Activated CD4-positive, alpha-beta T cell treated with anti-CD3 and anti-CD28 coated beads, Interleukin-2, amount 10 ng/mL, durations not matched to agents 24 days and 14 days (primary cell): ENCODE measurements at regions of chr17 and their contacts with region 1.

Region 1: DNA sequence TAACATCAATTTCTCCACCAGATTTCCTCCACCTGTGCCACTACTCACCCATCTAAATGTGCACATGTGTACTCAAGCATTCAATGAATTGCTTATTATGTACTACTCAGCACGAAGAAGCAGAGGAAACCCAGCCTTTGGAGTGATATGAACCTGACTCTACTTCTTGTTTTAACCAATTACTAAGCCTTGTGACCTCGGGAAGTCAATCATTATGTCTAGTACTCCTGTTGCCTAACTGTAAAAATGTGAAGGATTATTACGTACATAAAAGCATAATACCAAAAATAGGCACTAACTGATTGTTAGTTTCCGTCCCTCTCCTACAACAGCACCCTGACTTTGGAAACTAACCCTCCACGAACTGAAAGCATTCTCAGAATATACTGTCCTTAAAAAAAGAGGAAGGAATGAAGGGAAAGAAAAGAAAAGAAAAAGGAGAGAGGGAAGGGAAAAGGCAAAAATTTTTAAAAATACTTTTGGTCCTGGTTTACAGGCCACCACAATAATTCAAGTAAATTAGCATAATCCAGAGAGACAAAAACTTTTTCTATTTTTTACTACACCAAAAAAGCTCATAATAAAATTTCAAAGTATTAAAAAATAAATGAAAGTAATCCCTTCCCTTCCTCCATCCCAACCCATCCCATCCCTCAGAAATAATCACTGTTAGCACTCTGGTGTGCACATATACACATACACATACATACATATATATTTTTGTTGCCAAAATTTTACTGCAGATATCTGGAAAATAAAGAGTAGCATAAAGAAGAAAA is 53.6 kb downstream of the KANSL1 start:
- DNase-seq: no peak
- H3K4me3 Mint-ChIP-seq: no peak overlapping the region
- H3K27ac Mint-ChIP-seq: no peak overlapping the region
- H3K4me1 Mint-ChIP-seq: peaks cover 75% of the 10 kb centered on the region
- H3K27me3 Mint-ChIP-seq: no peaks in the 10 kb centered on the region

Region 2: GRCh38 chr17:46129302-46129701 is 10.3 kb before region 1 on chr17:
- intact Hi-C with region 1: loop called (anchors 1 kb)
- DNase-seq: no peak
- H3K4me3 Mint-ChIP-seq: no peak overlapping the region
- H3K27ac Mint-ChIP-seq: no peak overlapping the region
- H3K4me1 Mint-ChIP-seq: peaks cover 46% of the 10 kb centered on the region
- H3K27me3 Mint-ChIP-seq: no peaks in the 10 kb centered on the region

Region 3: DNA sequence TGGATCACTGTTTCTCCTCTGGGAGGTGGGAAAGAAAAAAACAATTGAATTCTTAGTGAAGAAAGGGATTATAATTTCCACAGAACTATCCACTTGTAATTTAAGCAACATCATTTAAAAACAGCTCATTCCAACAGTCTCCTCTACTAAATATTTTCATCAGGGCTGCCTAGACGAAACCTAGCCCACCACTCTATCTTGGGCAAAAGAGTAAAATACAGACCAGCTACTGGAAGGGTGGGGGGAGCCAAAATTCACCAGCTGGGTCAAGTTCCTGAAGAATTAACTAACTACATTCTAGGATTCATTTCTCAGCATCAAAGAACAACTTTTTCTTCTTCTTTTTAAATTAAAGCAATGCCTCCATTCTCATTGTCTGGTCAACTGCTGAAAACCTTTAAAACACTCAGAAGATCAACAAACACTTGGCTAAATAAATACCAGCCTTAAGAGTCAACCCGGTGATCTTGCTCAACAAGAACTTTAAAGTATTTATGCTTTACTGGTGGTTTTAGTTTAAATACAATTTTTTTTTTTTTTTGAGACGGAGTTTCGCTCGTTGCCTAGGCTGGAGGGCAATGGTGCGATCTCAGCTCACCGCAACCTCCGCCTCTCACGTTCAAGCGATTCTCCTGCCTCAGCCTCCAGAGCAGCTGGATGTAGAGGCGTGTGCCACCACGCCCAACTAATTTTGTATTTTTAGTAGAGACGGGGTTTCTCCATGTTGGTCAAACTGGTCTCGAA is 28.4 kb after region 1 on chr17:
- intact Hi-C with region 1: no loop called
- DNase-seq: no peak
- H3K4me3 Mint-ChIP-seq: no peak overlapping the region
- H3K27ac Mint-ChIP-seq: no peak overlapping the region
- H3K4me1 Mint-ChIP-seq: peaks cover 57% of the 10 kb centered on the region
- H3K27me3 Mint-ChIP-seq: no peaks in the 10 kb centered on the region